ENCODE measurements at regions of chr2 and their contacts with region 1.

Region 1: DNA sequence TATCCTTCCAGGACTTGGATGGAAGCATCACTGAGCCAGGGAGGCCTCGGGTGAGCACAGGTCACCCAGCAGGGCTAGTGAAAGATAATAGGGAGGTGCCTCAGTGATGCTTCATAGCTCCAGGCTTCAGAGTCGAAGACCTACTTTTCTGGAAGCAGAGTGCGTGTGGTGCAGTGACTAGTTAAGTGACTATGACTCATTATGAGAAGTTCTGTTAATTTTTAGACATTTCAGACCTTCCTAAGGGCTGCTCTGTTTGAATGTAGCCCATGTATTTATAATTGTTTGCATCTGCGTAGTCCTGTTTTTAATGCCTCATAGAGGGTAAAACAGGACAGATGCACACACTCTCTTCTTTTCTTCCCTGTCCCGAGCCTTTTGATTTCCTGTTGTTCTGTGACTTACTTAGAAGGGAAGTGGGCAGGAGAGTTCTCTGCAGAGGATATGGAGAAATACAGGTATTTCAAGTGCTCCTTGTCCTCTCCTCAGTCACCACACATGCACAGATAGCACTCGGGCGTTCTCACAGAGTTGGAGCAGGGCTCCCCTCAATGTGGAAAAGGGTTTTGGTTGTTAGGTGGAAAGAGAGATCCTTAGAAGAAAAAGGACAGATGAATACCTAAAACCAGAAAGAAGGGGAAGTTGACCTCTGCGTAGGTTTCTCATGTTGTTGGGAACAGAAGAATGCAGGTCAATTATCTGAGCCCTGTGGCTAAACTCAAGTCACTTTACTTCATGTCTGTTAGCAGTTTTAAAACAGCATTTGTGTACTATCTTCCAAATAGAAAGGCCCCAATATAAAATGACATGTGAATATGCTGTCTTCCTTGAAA is 34.7 kb downstream of the RALB start:
- DNase-seq: peak; percentile 96
- ATAC-seq: peak; percentile 91
- H3K4me3 ChIP-seq: no peak overlapping the region
- H3K27ac ChIP-seq: peak overlapping the region; percentile 69
- H3K4me1 ChIP-seq: peaks cover 16% of the 10 kb centered on the region
- H3K27me3 ChIP-seq: no peaks in the 10 kb centered on the region
- CTCF ChIP-seq: no peak
- POLR2A ChIP-seq: no peak
- RAD21 ChIP-seq: no peak

Region 2: GRCh38 chr2:119943058-119943457 is 344.3 kb before region 1 on chr2:
- CTCF ChIA-PET with region 1: no interaction called
- POLR2A ChIA-PET with region 1: no interaction called
- dilution Hi-C with region 1: no loop called
- in situ Hi-C with region 1: no loop called
- intact Hi-C with region 1: no loop called
- DNase-seq: no peak
- ATAC-seq: no peak
- H3K4me3 ChIP-seq: no peak overlapping the region
- H3K27ac ChIP-seq: no peak overlapping the region
- H3K4me1 ChIP-seq: no peaks in the 10 kb centered on the region
- H3K27me3 ChIP-seq: no peaks in the 10 kb centered on the region
- CTCF ChIP-seq: no peak
- POLR2A ChIP-seq: no peak
- RAD21 ChIP-seq: no peak

Region 3: GRCh38 chr2:120206022-120206581 is 81.3 kb before region 1 on chr2:
- CTCF ChIA-PET with region 1: no interaction called
- POLR2A ChIA-PET with region 1: no interaction called
- dilution Hi-C with region 1: no loop called
- in situ Hi-C with region 1: no loop called
- intact Hi-C with region 1: no loop called
- DNase-seq: no peak
- ATAC-seq: no peak; the same call in 1 of the 2 replicates
- H3K4me3 ChIP-seq: no peak overlapping the region
- H3K27ac ChIP-seq: no peak overlapping the region
- H3K4me1 ChIP-seq: no peaks in the 10 kb centered on the region
- H3K27me3 ChIP-seq: peaks cover 2% of the 10 kb centered on the region; the same call in 1 of the 2 replicates
- CTCF ChIP-seq: peak; percentile 42
- POLR2A ChIP-seq: no peak
- RAD21 ChIP-seq: peak; percentile 37; the same call in 1 of the 2 replicates

Region 4: DNA sequence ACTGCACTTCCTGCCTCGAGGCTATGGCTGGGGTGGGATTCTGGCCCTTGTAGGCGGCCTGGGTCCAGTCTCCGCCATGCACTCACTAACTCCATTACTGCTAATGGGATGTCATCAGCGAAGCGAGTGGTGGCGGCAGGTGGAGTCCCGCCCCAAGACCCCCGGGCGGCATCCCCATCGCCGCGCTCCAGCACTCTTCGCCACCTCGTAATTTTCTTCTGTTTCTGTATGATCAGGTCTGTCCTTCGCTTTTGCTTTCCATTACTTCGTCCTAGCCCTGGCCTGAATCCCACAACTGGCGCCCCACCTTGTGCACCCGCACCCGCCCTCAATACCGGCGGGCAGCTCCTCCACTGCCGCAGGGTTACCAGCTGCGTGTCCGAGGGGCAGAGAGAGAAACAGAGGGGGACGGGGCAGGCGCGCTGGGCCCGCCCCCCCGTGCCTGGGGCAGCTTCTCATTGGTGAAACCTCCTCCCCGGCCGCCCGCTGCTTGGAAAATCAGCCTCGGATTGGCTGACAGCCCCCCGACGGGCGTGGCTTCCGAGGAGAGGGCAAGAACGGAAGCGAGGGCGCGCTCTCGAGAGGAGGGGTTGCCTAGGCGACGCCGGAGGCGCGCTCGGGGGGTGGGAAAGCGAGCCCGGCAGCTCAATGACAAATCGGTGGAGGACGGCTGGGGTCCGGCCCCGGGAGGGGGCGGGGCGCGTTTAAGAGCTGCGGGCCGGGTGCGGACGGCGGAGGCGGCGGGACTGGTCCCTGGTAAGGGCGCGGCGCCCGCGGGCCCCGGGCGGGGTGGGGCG is 35.0 kb before region 1 on chr2 and contains the start of gene RALB:
- CTCF ChIA-PET with region 1: interaction called, 4 read pairs
- POLR2A ChIA-PET with region 1: interaction called, 4 read pairs
- dilution Hi-C with region 1: no loop called
- in situ Hi-C with region 1: no loop called
- intact Hi-C with region 1: loop called (anchors 1 kb)
- DNase-seq: peak; percentile 97
- ATAC-seq: peak; percentile 94
- H3K4me3 ChIP-seq: peak within 1 kb of the TSS; percentile 74
- H3K27ac ChIP-seq: peak within 1 kb of the TSS; percentile 80
- H3K4me1 ChIP-seq: peaks cover 5% of the 10 kb centered on the region; the same call in 1 of the 2 replicates
- H3K27me3 ChIP-seq: peaks cover 11% of the 10 kb centered on the region; the same call in 1 of the 2 replicates
- CTCF ChIP-seq: no peak
- POLR2A ChIP-seq: peak; percentile 54
- RAD21 ChIP-seq: no peak
- total RNA-seq, gene RALB: 53.6 and 75.3 TPM in 2 replicates

Region 5: GRCh38 chr2:120298173-120298835 is 10.9 kb after region 1 on chr2:
- CTCF ChIA-PET with region 1: interaction called, 11 read pairs
- POLR2A ChIA-PET with region 1: no interaction called
- dilution Hi-C with region 1: no loop called
- in situ Hi-C with region 1: no loop called
- intact Hi-C with region 1: no loop called
- DNase-seq: peak; percentile 84
- ATAC-seq: peak; percentile 80
- H3K4me3 ChIP-seq: no peak overlapping the region
- H3K27ac ChIP-seq: no peak overlapping the region
- H3K4me1 ChIP-seq: peaks cover 18% of the 10 kb centered on the region
- H3K27me3 ChIP-seq: no peaks in the 10 kb centered on the region
- CTCF ChIP-seq: no peak
- POLR2A ChIP-seq: no peak
- RAD21 ChIP-seq: no peak

Measured in IMR-90 (cell line).